Heart left ventricle (tissue), 16 donors: ENCODE measurements at regions of chr6 and their contacts with region 1.

Region 1: GRCh38 chr6:28225056-28225834 is at the start of gene ZSCAN9:
- DNase-seq: peak; percentile 85 to 92 (median 89)
- ATAC-seq: peak; percentile 96 to 99 (median 98)
- H3K4me3 ChIP-seq: peak within 1 kb of the TSS; percentile 70 to 93 (median 78)
- H3K27ac ChIP-seq: peak within 1 kb of the TSS; percentile 3 to 87 (median 82)
- H3K4me1 ChIP-seq: peaks cover 0 to 26% (median 12%) of the 10 kb centered on the region in 12 donors
- H3K27me3 ChIP-seq: peaks cover 0 to 19% (median 7%) of the 10 kb centered on the region in 9 donors
- CTCF ChIP-seq: no peak
- POLR2A ChIP-seq: no peak
- total RNA-seq, gene ZSCAN9: 6.8 to 12.6 (median 7.9) TPM

Region 2: DNA sequence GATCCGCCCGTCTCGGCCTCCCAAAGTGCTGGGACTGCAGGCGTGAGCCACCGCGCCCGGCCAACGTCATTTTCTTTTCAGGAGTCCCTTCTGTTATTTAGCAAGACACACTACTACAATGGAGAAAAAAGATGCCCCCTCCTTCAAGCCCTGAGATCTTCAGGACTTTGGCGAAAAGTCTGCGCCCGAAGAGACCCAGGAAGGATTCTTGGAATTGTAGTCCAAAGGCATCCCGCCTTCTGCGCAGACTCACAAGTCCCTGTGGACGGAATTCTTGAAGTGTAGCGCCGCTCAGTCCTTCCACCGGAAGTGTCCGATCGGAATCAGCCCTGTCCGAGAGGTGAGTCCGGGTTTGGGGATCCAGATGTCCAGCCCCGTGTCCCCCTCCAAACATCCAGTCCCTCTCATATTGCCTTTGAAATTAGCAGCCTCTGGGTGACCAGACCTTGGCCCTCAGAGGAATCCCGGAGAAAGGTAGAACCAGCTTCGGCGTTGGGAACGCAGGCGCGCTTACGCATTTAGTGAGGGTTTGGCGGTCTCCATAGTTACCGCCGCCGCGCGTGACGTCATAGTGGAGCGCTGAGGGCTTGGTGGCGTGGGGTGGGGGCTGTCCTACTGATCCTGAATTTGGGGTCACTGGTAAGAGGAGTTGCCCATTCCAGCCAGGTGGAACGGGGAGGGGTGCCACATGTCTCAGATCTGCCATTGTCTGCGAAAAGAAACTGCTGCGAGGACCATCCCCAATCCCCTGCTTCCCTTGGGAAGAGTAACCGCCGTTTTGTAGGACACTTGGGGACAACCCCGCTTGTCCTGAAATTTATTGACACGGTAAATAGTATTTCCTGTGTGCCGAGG is 144.4 kb before region 1 on chr6:
- intact Hi-C with region 1: loop called in 1 of 10 experiments (anchors 2 kb)
- DNase-seq: peak; percentile 94 to 97 (median 95)
- ATAC-seq: peak; percentile 97 to 99 (median 99)
- H3K4me3 ChIP-seq: peak overlapping the region; percentile 56 to 94 (median 77)
- H3K27ac ChIP-seq: peak overlapping the region; percentile 59 to 91 (median 86)
- H3K4me1 ChIP-seq: peaks cover 0 to 16% (median 6%) of the 10 kb centered on the region in 12 donors
- H3K27me3 ChIP-seq: no peaks in the 10 kb centered on the region
- CTCF ChIP-seq: peak in 1 of 12 donors; percentile 6
- POLR2A ChIP-seq: peak in 1 of 2 donors; percentile 48

Region 3: DNA sequence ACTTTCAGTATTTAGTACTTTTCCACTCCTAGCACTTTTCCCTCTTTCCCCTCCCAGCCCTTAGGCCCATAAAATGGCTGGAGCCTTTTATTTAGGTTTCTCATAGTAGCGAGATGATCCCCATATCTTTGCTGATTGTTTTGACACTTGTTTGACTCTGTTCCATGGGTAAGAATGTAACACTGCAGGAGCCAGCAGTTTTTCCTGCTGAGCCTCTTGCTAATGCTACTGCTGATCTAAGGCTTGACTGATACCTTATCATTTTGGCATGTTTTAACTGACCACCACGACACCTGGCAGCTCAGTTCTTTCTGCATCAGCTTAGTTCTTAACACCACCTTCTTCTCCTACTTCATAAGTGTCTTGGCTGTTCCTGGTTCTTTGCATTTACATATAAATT is 54.0 kb before region 1 on chr6:
- intact Hi-C with region 1: no loop called
- DNase-seq: no peak
- ATAC-seq: no peak
- H3K4me3 ChIP-seq: no peak overlapping the region
- H3K27ac ChIP-seq: no peak overlapping the region
- H3K4me1 ChIP-seq: no peaks in the 10 kb centered on the region
- H3K27me3 ChIP-seq: no peaks in the 10 kb centered on the region
- CTCF ChIP-seq: no peak
- POLR2A ChIP-seq: no peak

Region 4: GRCh38 chr6:28252009-28252975 is 27.0 kb after region 1 on chr6 and contains the start of gene ZKSCAN4:
- intact Hi-C with region 1: loop called in 1 of 10 experiments (anchors 2 kb)
- DNase-seq: peak; percentile 72 to 90 (median 84)
- ATAC-seq: peak; percentile 96 to 99 (median 98)
- H3K4me3 ChIP-seq: peak within 1 kb of the TSS; percentile 54 to 87 (median 78)
- H3K27ac ChIP-seq: peak within 1 kb of the TSS in 11 of 12 donors; percentile 9 to 83 (median 58)
- H3K4me1 ChIP-seq: peaks cover 6 to 32% (median 15%) of the 10 kb centered on the region in 12 donors
- H3K27me3 ChIP-seq: no peaks in the 10 kb centered on the region
- CTCF ChIP-seq: no peak
- POLR2A ChIP-seq: no peak
- total RNA-seq, gene ZKSCAN4: 2.1 to 5.0 (median 2.5) TPM

Region 5: DNA sequence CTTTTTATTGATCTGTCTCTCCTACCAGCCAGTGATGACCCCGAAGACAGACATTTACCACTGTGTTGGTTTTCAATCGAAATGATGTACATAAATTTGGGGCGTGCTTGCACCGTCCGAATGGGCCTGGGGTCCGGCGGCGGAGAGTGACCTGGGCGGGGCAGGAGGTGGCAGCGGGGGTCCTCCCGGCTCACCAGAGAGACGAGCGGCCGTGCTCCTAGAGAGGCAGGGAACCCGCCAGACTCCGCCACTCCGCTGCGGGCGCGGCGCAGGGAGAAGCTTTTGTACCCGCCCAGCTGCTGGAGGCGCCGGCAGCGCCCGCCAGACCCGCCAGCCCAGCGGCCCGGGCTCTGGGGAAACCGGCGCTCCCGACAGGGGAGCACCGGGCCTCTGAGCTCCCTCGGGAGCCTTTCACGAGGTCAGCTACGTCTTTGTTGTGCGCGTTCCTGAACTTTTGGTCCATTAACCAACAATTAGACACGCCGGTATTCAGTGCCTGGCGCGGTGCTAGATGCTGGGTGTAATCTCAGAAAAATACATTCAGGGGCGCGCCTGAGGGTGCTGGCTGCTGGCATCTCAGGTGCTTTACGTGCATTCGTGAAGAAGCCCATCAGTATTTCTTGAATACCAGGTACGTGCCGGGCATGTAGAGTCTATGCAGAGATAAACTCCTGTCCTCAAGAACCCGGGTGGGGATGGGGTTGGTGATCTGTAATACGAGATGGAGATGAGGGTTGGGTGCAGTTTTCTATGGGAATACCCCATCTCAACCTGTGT is 56.2 kb after region 1 on chr6 and contains the start of gene PGBD1:
- intact Hi-C with region 1: loop called in 1 of 10 experiments (anchors 5 kb)
- DNase-seq: peak; percentile 73 to 90 (median 88)
- ATAC-seq: peak; percentile 68 to 99 (median 96)
- H3K4me3 ChIP-seq: peak within 1 kb of the TSS; percentile 59 to 88 (median 74)
- H3K27ac ChIP-seq: peak within 1 kb of the TSS in 9 of 12 donors; percentile 29 to 76 (median 57)
- H3K4me1 ChIP-seq: peaks cover 0 to 18% (median 7%) of the 10 kb centered on the region in 12 donors
- H3K27me3 ChIP-seq: no peaks in the 10 kb centered on the region
- CTCF ChIP-seq: no peak
- POLR2A ChIP-seq: peak in 1 of 2 donors; percentile 47
- total RNA-seq, gene PGBD1: 2.5 to 3.8 (median 2.9) TPM